A549 (cell line): ENCODE measurements at regions of chr14 and their contacts with region 1.

Region 1: GRCh38 chr14:21014761-21015190 is 10.1 kb downstream of the NDRG2 start:
- DNase-seq: peak; percentile 76 to 86
- ATAC-seq: peak; percentile 92 to 95
- H3K4me3 ChIP-seq: no peak overlapping the region
- H3K27ac ChIP-seq: no peak overlapping the region
- H3K4me1 ChIP-seq: no peaks in the 10 kb centered on the region
- CTCF ChIP-seq: peak; percentile 93
- EP300 ChIP-seq: no peak
- POLR2A ChIP-seq: no peak
- RAD21 ChIP-seq: peak; percentile 90 to 96

Region 2: DNA sequence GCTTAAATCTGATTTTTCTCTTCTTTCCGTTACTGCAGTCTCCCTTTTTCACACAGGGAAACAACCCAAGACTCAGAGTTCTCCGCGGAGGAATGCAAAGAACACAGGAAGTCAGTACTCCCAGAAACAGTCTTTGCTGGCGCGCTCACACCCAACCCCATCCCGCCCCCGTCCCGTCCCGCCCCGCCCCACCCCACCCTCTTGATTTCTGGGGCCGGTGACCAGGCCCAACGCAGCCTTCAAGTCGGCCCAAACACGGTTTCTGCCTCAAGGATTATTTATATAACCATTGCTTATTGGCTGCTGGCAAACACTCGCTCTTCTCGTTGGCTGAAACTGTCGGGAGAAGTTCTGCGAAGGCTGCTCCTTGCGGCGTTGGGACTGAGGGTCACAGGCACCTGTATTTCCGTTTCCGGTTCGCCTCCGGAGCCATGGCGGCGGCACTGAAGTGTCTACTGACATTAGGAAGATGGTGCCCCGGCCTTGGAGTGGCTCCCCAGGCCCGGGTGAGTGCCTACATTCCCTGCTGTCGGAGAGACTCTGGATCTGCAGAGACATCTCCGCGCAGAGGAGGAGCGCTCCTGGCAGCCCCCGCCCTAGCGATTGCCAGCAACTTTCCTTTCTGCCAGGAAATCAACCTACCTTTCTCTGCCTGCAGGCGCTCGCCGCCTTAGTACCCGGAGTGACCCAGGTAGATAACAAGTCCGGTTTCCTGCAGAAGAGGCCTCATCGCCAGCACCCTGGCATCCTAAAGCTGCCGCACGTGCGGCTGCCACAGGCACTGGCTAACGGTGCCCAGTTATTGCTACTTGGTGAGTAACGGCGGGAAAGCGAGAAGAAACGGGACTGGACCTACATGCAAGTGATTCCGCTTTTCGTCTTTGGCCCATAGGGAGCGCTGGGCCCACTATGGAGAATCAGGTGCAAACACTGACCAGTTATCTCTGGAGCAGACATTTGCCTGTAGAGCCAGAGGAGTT is 24.9 kb before region 1 on chr14 and contains the start of gene METTL17:
- CTCF ChIA-PET with region 1: interaction called, 23 read pairs
- POLR2A ChIA-PET with region 1: no interaction called
- DNase-seq: peak; percentile 93 to 98
- ATAC-seq: peak; percentile 98
- H3K4me3 ChIP-seq: peak within 1 kb of the TSS; percentile 69
- H3K27ac ChIP-seq: peak within 1 kb of the TSS; percentile 76 to 91
- H3K4me1 ChIP-seq: peaks cover 32% of the 10 kb centered on the region
- CTCF ChIP-seq: no peak; the same call in 2 of the 3 replicates
- EP300 ChIP-seq: no peak
- POLR2A ChIP-seq: peak; percentile 70
- RAD21 ChIP-seq: 0 out of 5 replicates have a peak, but pooled peaks have one; percentile 9 to 13
- polyA plus RNA-seq, gene METTL17: 116 and 126 TPM in 2 replicates

Region 3: DNA sequence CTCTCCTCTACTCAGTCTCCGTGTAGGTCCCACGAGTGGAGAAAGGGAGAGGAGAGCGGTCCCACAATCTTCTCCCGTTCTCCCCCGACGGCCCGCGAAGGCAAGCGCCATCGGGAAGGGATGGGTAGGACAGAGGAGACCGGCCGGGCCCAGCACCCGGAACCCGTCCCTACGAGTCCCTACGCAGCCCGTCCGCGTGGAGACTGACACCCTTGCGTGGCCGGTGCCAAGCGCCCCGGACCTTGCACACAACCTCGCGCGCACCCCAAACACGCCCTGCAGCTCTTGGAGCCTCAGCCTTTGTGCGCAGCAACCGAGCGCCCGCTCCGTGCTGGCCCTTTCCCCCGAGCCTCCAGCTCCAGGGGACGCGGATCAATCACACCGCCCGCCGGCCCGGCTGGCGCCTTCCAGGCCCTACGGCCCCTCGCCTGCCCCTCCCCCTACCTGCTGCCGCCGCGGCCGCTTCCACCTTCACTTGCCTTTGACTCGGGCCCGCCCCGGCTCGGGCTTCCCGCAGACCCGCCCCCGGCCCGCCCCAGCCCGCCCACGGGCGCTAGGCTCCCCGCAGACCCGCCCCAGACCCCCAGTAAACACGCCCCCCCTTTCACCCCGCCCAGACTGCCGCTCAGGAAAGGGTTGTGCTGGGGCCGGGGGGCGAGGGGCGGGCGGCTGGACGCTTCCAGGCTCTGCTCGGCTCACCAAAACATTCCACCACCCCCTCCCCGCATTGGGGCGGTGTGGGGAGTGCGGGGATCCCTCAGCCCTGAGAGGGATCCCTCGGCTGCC is 10.0 kb after region 1 on chr14 and contains the start of gene NDRG2:
- CTCF ChIA-PET with region 1: interaction called, 210 read pairs
- POLR2A ChIA-PET with region 1: no interaction called
- DNase-seq: peak; percentile 14 to 49
- ATAC-seq: peak; percentile 78 to 85
- H3K4me3 ChIP-seq: peak within 1 kb of the TSS; percentile 58
- H3K27ac ChIP-seq: peak within 1 kb of the TSS; percentile 67 to 84
- H3K4me1 ChIP-seq: 0 out of 3 replicates have a peak, but pooled peaks cover 3% of the 10 kb centered on the region
- CTCF ChIP-seq: no peak
- EP300 ChIP-seq: no peak
- POLR2A ChIP-seq: no peak
- RAD21 ChIP-seq: no peak
- polyA plus RNA-seq, gene NDRG2: 6.8 and 8.8 TPM in 2 replicates

Region 4: GRCh38 chr14:21049271-21049673 is 34.5 kb after region 1 on chr14:
- CTCF ChIA-PET with region 1: interaction called, 323 read pairs
- POLR2A ChIA-PET with region 1: no interaction called
- DNase-seq: no peak
- ATAC-seq: no peak
- H3K4me3 ChIP-seq: no peak overlapping the region
- H3K27ac ChIP-seq: no peak overlapping the region
- H3K4me1 ChIP-seq: peaks cover 2% of the 10 kb centered on the region; the same call in 1 of the 3 replicates
- CTCF ChIP-seq: no peak
- EP300 ChIP-seq: no peak
- POLR2A ChIP-seq: no peak
- RAD21 ChIP-seq: no peak

Region 5: GRCh38 chr14:21071225-21072030 is 56.7 kb after region 1 on chr14:
- CTCF ChIA-PET with region 1: interaction called, 47 read pairs
- POLR2A ChIA-PET with region 1: interaction called, 3 read pairs
- DNase-seq: peak; percentile 37 to 58
- ATAC-seq: peak; percentile 45 to 67
- H3K4me3 ChIP-seq: peak overlapping the region; percentile 79
- H3K27ac ChIP-seq: peak overlapping the region; percentile 83 to 95
- H3K4me1 ChIP-seq: peaks cover 23% of the 10 kb centered on the region
- CTCF ChIP-seq: no peak
- EP300 ChIP-seq: no peak
- POLR2A ChIP-seq: no peak; the same call in 1 of the 2 replicates
- RAD21 ChIP-seq: no peak

Region 6: DNA sequence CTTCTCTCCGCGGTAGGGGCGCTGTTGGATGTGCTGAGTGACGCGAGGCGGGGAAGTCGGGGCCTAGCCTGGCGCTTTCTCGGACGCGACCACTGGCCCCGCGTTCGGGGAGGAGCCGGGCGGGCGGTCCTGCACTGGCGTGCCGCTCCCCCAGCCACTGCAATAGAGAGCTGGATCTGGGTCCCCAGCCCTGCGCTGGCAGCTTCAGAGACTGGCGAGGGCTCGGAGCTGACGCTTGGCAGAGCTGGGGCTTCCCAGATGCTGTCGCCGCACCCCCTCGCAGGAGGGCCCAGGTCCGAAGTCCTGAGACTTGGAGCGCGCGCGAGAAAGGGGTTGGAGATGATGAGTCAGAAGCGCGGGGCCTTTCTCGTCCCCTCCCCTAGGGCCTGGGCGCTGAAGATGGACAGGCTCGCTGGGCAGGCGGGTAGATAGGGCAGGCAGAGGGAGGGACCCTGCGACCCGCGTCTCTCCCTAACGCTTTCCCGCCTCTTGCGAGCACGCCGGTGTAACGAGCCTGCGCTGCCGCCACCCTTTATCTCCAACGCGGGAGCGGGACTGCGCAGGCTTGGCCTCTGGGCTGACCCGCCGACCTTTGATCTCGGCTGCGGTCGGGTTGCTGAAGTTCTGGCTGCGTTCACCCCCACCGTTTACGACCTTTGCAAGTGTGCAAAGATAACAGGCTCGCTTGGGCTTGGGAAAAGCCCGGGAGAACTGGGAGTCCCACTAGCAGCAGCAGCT is 89.1 kb after region 1 on chr14:
- CTCF ChIA-PET with region 1: interaction called, 244 read pairs
- POLR2A ChIA-PET with region 1: interaction called, 18 read pairs
- DNase-seq: peak; percentile 93 to 98
- ATAC-seq: peak; percentile 82 to 91
- H3K4me3 ChIP-seq: peak overlapping the region; percentile 57
- H3K27ac ChIP-seq: peak overlapping the region; percentile 96 to 97
- H3K4me1 ChIP-seq: peaks cover 81% of the 10 kb centered on the region
- CTCF ChIP-seq: peak; percentile 56
- EP300 ChIP-seq: 0 out of 5 replicates have a peak, but pooled peaks of 1 of the 2 experiments have one; percentile 15
- POLR2A ChIP-seq: peak; percentile 86
- RAD21 ChIP-seq: peak; percentile 10 to 20; a peak in 1 of 5 replicates